Activated CD4-positive, alpha-beta memory T cell treated with anti-CD3 and anti-CD28 coated beads for 36 hours (primary cell): ENCODE measurements at regions of chr1 and their contacts with region 1.

Region 1: DNA sequence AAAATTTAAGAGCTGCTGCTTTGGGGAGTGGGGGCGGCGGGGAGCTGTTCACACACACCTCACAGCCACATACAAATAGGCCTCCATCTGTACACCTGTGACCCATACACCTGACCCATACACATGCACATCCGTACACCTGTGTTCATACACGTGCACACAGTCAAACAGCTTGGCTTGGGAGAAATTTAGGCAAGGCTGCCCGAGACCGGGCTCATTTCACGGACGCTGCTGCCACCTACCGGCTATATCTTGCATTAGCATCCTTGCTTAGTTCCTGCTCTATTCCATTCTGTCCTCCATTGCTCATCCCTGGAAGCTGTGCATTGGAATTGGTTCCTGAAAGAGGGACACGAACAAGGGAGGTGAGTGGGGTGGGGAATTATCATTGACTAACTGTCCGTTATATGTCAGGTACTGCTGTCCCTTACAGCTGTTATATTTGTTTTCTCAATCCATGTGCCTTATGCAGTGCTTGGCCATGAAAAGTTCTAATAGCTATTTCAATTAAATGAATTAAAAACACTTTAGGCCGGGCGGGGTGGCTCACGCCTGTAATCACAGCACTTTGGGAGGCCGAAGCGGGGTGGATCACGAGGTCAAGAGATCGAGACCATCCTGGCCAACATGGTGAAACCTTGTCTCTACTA is 37.1 kb upstream of the EPB41 start:
- DNase-seq: peak; percentile 85
- H3K4me3 Mint-ChIP-seq: no peak overlapping the region
- H3K27ac Mint-ChIP-seq: no peak overlapping the region
- H3K4me1 Mint-ChIP-seq: peaks cover 8% of the 10 kb centered on the region
- H3K27me3 Mint-ChIP-seq: peaks cover 6% of the 10 kb centered on the region

Region 2: DNA sequence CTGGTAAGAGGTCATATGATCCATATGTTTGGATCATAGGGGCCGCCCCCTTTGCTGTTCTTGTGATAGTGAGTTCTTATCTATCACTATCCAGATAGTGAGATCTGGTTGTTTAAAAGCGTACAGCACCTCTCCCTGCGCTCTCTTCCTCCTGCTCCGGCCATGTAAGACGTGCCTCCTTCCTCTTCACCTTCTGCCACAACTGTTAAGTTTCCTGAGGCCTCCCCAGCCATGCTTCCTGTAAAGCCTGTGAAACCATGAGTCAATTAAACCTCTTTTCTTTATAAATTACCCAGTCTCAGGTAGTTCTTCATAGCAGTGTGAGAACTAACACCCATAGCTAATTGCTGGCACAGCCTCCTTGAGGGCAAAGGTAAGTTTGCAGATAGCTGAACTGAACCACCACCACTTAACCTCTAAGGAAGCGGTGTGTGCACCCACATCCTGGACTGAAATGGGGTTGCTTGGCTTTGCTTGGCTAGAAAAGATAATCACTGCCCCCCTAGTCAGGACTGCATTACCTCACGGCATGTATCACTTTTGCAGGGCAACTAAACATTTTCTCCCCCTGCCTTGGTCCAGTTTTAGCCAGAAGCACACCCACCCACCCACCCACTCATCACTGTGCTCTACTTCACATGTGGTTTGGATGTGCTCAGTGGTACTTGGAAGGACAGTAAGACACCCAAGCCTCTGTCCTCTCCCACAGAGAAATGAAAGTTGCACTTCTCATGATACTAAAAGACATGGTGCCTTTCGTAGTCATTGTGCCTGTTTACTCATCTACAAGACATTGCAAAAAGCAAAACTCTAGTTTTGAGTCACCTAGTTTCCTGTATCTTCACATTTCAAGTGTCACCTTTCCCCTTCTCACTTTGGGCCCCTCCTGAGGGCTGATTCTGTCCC is 677.7 kb before region 1 on chr1:
- CTCF ChIA-PET with region 1: no interaction called
- POLR2A ChIA-PET with region 1: no interaction called
- intact Hi-C with region 1: no loop called
- DNase-seq: peak; percentile 89
- H3K4me3 Mint-ChIP-seq: peak overlapping the region; percentile 28
- H3K27ac Mint-ChIP-seq: peak overlapping the region; percentile 87
- H3K4me1 Mint-ChIP-seq: peaks cover 41% of the 10 kb centered on the region
- H3K27me3 Mint-ChIP-seq: no peaks in the 10 kb centered on the region

Region 3: DNA sequence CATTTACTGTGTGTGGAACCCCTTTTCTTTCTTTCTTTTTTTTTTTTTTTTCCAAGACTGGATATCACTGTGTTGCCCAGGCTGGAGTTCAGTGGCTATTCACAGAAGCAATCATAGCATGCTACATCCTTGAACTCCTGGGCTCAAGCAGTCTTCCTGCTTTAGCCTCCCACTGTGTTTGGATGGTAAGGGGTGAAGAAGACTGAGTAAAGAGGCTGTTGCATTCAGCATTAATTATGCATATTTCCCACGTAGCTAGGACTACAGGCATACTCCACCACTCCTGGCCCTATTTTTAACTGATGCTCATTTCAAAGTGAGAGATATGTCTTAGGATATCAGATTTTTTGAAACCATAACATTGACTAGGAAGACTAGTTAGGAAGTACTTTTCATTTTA is 468.2 kb before region 1 on chr1:
- CTCF ChIA-PET with region 1: interaction called, 5 read pairs
- POLR2A ChIA-PET with region 1: no interaction called
- intact Hi-C with region 1: loop called (anchors 10 kb)
- DNase-seq: no peak
- H3K4me3 Mint-ChIP-seq: no peak overlapping the region
- H3K27ac Mint-ChIP-seq: no peak overlapping the region
- H3K4me1 Mint-ChIP-seq: peaks cover 2% of the 10 kb centered on the region
- H3K27me3 Mint-ChIP-seq: no peaks in the 10 kb centered on the region

Region 4: GRCh38 chr1:28642847-28643635 is 234.2 kb before region 1 on chr1 and contains the start of gene TAF12:
- CTCF ChIA-PET with region 1: interaction called, 10 read pairs
- POLR2A ChIA-PET with region 1: interaction called, 3 read pairs
- intact Hi-C with region 1: loop called (anchors 5 kb)
- DNase-seq: peak; percentile 95
- H3K4me3 Mint-ChIP-seq: peak within 1 kb of the TSS; percentile 93
- H3K27ac Mint-ChIP-seq: peak within 1 kb of the TSS; percentile 96
- H3K4me1 Mint-ChIP-seq: peaks cover 45% of the 10 kb centered on the region
- H3K27me3 Mint-ChIP-seq: no peaks in the 10 kb centered on the region
- total RNA-seq, gene TAF12: 26.8 to 27.5 TPM

Region 5: GRCh38 chr1:28782011-28782410 is 95.2 kb before region 1 on chr1:
- CTCF ChIA-PET with region 1: interaction called, 205 read pairs
- POLR2A ChIA-PET with region 1: interaction called, 3 read pairs
- intact Hi-C with region 1: loop called (anchors 1 kb)
- DNase-seq: no peak
- H3K4me3 Mint-ChIP-seq: no peak overlapping the region
- H3K27ac Mint-ChIP-seq: no peak overlapping the region
- H3K4me1 Mint-ChIP-seq: peaks cover 7% of the 10 kb centered on the region
- H3K27me3 Mint-ChIP-seq: peaks cover 1% of the 10 kb centered on the region

Region 6: GRCh38 chr1:28830814-28831213 is 46.4 kb before region 1 on chr1:
- CTCF ChIA-PET with region 1: interaction called, 10 read pairs
- POLR2A ChIA-PET with region 1: no interaction called
- intact Hi-C with region 1: no loop called
- DNase-seq: no peak
- H3K4me3 Mint-ChIP-seq: no peak overlapping the region
- H3K27ac Mint-ChIP-seq: no peak overlapping the region
- H3K4me1 Mint-ChIP-seq: no peaks in the 10 kb centered on the region
- H3K27me3 Mint-ChIP-seq: no peaks in the 10 kb centered on the region

Region 7: GRCh38 chr1:29033829-29034466 is 156.7 kb after region 1 on chr1:
- CTCF ChIA-PET with region 1: interaction called, 401 read pairs
- POLR2A ChIA-PET with region 1: interaction called, 7 read pairs
- intact Hi-C with region 1: loop called (anchors 1 kb)
- DNase-seq: no peak
- H3K4me3 Mint-ChIP-seq: no peak overlapping the region
- H3K27ac Mint-ChIP-seq: no peak overlapping the region
- H3K4me1 Mint-ChIP-seq: no peaks in the 10 kb centered on the region
- H3K27me3 Mint-ChIP-seq: no peaks in the 10 kb centered on the region

Region 8: GRCh38 chr1:29202584-29203340 is 325.5 kb after region 1 on chr1:
- CTCF ChIA-PET with region 1: interaction called, 43 read pairs
- POLR2A ChIA-PET with region 1: no interaction called
- intact Hi-C with region 1: loop called (anchors 1 kb)
- DNase-seq: peak; percentile 94
- H3K4me3 Mint-ChIP-seq: no peak overlapping the region
- H3K27ac Mint-ChIP-seq: peak overlapping the region; percentile 23
- H3K4me1 Mint-ChIP-seq: peaks cover 6% of the 10 kb centered on the region
- H3K27me3 Mint-ChIP-seq: no peaks in the 10 kb centered on the region